CD4-positive, alpha-beta memory T cell (primary cell): ENCODE measurements at regions of chr1 and their contacts with region 1.

Region 1: DNA sequence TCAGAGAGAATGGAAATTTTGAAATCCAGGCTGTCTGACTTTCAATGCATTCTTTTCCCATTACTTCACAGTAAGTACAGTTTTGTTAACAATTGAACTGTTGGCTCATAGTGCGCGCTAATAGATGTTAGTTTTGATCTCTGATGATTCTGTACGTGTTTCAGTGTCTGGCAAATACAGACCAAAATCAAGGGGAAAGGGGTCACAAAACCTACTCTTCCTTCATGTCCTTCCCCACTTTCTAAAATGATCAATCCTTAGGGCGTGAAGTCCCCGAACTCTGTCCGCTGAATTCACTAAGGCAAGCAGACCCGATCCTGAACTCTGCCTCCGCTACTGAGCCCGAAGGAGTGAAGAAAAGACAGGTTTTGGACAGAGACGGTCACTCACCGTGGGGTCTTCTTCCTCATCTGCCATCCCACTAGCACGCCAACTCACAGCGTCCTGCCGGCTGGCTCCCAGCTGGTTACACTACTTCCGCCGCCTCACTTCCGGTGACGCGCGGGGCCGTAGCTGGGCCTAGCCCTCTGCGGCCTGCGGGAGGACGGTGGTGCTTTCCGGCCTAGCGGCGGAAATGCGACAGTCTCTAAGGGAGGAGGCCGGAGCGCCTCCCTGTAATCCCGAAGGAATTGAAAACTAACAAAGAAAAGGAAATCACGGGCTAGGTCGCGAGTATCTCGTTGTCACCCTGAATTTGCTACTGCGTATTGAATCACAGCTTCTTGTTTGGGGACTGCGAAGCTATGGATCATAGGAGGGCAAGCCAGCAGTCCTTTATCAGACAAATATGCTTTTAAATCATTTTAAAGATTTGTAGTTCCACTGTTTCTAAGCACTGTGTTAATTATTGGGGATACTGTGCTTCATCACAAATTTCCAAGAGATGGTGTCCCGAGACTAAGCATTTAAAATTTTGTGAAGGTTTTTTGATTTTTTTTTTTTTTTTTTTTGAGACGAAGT is at the start of gene TAF13:
- DNase-seq: peak; percentile 82 to 88 (median 85)
- H3K4me3 ChIP-seq: peak within 1 kb of the TSS; percentile 95 to 99
- H3K4me3 Mint-ChIP-seq: peak within 1 kb of the TSS; percentile 95 to 100 (median 96)
- H3K27ac ChIP-seq: peak within 1 kb of the TSS; percentile 93
- H3K27ac Mint-ChIP-seq: peak within 1 kb of the TSS; percentile 99 to 100 (median 99)
- H3K4me1 ChIP-seq: peaks cover 17% of the 10 kb centered on the region
- H3K4me1 Mint-ChIP-seq: peaks cover 7 to 23% (median 17%) of the 10 kb centered on the region in 4 donors
- H3K27me3 ChIP-seq: no peaks in the 10 kb centered on the region
- H3K27me3 Mint-ChIP-seq: no peaks in the 10 kb centered on the region
- total RNA-seq, gene TAF13: 12.5 to 14.6 TPM

Region 2: DNA sequence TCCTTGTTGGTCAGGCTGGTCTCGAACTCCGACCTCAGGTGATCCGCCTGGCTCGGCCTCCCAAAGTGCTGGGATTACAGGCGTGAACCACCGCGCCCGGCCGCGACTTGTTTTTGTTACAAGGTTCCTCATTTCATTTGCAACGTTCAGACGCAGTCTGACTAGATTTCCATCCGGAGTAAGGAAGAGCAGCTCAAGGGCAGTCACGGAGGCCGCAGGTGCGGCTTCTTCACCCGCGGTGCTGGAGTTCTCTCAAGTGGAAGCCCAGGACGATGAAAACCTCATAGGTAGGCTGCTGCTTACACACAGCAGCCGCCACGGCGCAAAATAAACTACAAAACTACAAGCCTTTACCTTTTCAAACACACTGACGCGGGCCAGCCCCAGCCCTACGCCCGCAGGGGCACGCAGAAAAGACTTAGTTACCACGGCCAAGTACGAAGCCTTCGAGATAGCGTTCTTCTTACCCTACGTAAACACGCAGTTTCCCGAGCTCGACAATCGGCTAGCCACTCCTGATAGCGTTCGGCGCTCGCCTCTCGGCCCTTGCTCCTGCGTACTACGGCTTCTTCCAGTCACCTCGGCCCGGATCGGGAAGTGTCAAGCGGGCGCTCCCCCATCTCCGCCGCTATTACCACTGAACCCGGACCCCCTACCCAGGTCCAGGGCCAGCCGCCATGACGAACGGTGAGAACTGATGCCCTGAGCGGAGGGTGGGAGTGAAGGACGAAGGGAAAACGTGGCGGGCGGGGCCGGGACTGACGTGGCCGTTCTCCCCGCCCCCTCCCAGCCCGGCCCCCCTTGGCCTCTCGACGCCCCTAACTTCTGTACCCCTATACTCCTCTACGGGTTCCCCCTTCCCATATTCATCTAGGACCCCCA is 14.6 kb after region 1 on chr1 and contains the start of gene TMEM167B:
- CTCF ChIA-PET with region 1: interaction called, 5 read pairs
- POLR2A ChIA-PET with region 1: interaction called, 46 read pairs
- intact Hi-C with region 1: loop called (anchors 1 kb)
- DNase-seq: peak; percentile 88 to 93 (median 89)
- H3K4me3 ChIP-seq: peak within 1 kb of the TSS; percentile 67 to 72
- H3K4me3 Mint-ChIP-seq: peak within 1 kb of the TSS; percentile 93 to 97 (median 94)
- H3K27ac ChIP-seq: peak within 1 kb of the TSS; percentile 90
- H3K27ac Mint-ChIP-seq: peak within 1 kb of the TSS; percentile 89 to 99 (median 98)
- H3K4me1 ChIP-seq: peaks cover 32% of the 10 kb centered on the region
- H3K4me1 Mint-ChIP-seq: peaks cover 18 to 48% (median 36%) of the 10 kb centered on the region in 4 donors
- H3K27me3 ChIP-seq: no peaks in the 10 kb centered on the region
- H3K27me3 Mint-ChIP-seq: no peaks in the 10 kb centered on the region
- total RNA-seq, gene TMEM167B: 42.9 to 47.9 TPM

Region 3: GRCh38 chr1:109120356-109120755 is 44.5 kb after region 1 on chr1:
- CTCF ChIA-PET with region 1: no interaction called
- POLR2A ChIA-PET with region 1: no interaction called
- intact Hi-C with region 1: no loop called
- DNase-seq: no peak
- H3K4me3 ChIP-seq: no peak overlapping the region
- H3K4me3 Mint-ChIP-seq: no peak overlapping the region
- H3K27ac ChIP-seq: no peak overlapping the region
- H3K27ac Mint-ChIP-seq: no peak overlapping the region
- H3K4me1 ChIP-seq: no peaks in the 10 kb centered on the region
- H3K4me1 Mint-ChIP-seq: peaks cover 0 to 8% (median 5%) of the 10 kb centered on the region in 4 donors
- H3K27me3 ChIP-seq: no peaks in the 10 kb centered on the region
- H3K27me3 Mint-ChIP-seq: no peaks in the 10 kb centered on the region

Region 4: DNA sequence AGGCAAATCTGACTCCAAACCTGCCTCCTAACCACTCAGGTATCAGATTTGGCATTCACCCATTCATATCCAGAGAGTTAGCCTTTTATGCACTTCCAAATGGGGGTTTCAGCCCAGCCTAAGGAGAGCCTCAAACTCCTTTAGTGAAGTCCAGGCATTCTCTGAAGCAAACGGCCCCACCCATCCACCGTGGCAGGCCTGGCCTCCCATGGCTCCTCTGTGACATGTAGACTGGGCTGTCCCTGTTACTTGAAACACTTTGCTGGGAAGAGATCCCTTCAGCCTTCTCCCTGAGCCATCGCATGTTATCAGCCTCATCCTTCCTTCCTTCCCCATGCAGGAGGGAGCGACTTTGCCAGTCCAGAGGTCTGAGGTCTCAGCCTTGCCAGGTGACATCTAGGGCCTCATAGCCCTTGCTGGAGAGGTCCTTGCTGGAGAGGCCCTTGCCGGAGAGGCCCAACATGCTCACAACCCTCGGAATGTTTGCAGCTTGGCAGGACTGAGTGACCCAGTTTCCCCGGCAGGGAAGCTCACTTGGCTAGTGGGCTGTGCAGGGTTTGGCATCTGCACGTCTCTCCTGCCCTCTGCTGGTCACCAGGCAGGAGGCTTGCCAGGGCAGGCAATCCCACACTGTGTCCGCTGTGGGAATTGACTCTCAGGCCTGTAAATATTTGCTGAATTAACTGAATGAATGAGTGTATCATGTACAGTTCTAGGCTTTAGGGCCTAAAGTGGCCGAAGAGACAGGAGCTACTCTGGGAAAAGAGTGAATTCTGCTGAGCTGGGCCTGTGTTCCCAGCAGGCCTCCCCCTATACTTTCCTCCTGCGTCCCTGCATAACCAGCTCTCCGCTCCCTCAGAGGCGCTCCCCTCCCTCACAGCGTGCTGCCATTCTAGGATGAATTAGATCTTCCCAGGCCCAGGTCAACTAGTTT is 1236.6 kb after region 1 on chr1:
- CTCF ChIA-PET with region 1: no interaction called
- POLR2A ChIA-PET with region 1: no interaction called
- intact Hi-C with region 1: no loop called
- DNase-seq: peak; percentile 67 to 73 (median 70)
- H3K4me3 ChIP-seq: no peak overlapping the region
- H3K4me3 Mint-ChIP-seq: peak overlapping the region in 2 of 8 donors; percentile 32 to 57
- H3K27ac ChIP-seq: no peak overlapping the region
- H3K27ac Mint-ChIP-seq: peak overlapping the region in 2 of 7 donors; percentile 17 to 59
- H3K4me1 ChIP-seq: no peaks in the 10 kb centered on the region
- H3K4me1 Mint-ChIP-seq: peaks cover 0 to 2% (median under 1%) of the 10 kb centered on the region in 4 donors
- H3K27me3 ChIP-seq: no peaks in the 10 kb centered on the region
- H3K27me3 Mint-ChIP-seq: no peaks in the 10 kb centered on the region